ENCODE measurements at regions of chr11 and their contacts with region 1.

Region 1: DNA sequence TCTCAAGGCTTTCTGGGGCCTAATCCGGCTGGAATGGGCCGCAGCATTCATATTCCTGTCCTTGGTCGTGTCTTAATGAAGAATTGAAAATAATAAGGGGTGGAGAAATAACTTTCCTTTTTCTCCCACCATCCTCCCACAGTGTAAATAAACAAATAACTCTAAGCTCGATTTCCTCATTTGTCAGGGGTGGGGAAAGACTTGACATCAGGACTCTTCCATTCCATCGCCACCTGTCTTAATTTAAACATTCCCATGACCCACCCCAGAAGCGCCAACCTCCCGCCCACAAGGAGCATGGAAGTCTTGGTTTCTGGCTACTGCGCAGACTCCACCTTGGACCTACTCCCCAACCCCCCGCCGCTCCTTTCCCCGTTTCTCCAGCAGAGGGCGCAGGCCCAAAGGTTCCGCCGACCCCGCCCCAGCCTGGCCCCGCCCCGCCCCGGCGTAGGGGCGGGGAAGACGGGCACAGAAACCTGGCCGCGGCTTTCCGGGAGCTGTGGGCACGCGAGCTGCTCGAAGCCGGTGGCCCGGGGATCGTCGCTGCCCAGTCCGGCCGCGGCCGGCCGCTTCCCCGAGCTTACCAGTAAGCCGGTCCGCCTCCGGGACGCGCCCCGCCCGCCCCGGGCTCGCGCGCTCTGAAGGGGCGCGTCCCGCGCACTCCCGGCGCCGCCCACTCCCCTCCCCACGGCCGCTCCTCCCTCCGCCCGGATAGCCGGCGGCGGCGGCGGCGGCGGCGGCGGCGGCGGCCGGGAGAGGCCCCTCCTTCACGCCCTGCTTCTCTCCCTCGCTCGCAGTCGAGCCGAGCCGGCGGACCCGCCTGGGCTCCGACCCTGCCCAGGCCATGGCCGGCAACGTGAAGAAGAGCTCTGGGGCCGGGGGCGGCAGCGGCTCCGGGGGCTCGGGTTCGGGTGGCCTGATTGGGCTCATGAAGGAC is at the start of gene CBL:
- DNase-seq: peak; percentile 83 to 99 (median 93)
- ATAC-seq: peak; percentile 97
- H3K4me3 ChIP-seq: peak within 1 kb of the TSS; percentile 88
- H3K4me3 Mint-ChIP-seq: peak within 1 kb of the TSS; percentile 88 to 100 (median 98)
- H3K27ac ChIP-seq: peak within 1 kb of the TSS; percentile 91
- H3K27ac Mint-ChIP-seq: peak within 1 kb of the TSS; percentile 86 to 98 (median 94)
- H3K4me1 ChIP-seq: peaks cover 7 to 23% of the 10 kb centered on the region in 2 donors
- H3K4me1 Mint-ChIP-seq: peaks cover 18 to 49% (median 41%) of the 10 kb centered on the region in 7 donors
- H3K27me3 ChIP-seq: no peaks in the 10 kb centered on the region
- H3K27me3 Mint-ChIP-seq: peaks cover 0 to 3% (median 0%) of the 10 kb centered on the region in 5 donors
- total RNA-seq, gene CBL: 37.0 to 51.8 (median 40.5) TPM

Region 2: DNA sequence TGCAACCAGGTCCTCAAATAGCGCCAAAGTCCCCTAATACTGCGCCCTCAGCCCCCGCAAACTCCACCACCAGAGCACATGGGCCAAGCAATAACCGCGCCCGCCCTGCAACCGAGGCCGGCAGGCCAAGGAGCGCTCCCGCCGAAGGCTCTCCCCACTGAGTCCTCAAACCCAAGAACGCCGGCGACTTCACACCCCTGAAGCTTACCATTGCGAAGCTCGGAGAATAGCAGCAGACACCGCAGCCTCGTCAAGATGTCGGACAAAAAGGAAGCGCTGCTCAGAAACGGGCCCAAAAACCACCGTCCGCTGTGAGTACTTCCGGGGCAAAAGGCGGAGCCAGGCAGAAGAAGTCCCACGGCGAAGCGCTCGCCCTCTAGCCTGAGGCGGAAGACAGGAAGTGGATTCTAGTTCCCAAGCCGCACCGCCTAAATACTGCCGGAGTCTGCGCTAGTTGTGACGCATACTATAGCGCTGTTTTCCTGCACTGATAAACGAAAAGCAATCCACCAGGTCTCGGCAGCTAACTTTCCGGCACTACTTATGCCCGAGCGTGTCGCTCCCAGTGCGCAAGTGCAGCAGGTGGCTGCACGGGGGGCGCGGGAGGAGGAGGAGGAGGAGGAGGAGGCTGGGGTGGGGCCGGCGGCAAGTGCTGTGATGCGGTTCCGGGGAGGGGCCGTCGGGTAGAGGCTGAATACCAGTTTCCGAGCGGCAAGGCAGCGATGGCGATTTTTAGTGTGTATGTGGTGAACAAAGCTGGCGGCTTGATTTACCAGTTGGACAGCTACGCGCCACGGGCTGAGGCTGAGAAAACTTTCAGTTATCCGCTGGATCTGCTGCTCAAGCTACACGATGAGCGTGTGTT is 187.5 kb before region 1 on chr11 and contains the starts of genes RPS25 and TRAPPC4:
- CTCF ChIA-PET with region 1: interaction called, 3 read pairs
- POLR2A ChIA-PET with region 1: no interaction called
- intact Hi-C with region 1: loop called in 1 of 2 experiments (anchors 1 kb)
- DNase-seq: peak; percentile 87 to 98 (median 96)
- ATAC-seq: peak; percentile 93
- H3K4me3 ChIP-seq: peak within 1 kb of the TSS; percentile 89
- H3K4me3 Mint-ChIP-seq: peak within 1 kb of the TSS; percentile 96 to 100 (median 98)
- H3K27ac ChIP-seq: peak within 1 kb of the TSS; percentile 98
- H3K27ac Mint-ChIP-seq: peak within 1 kb of the TSS; percentile 99 to 100 (median 100)
- H3K4me1 ChIP-seq: peaks cover 30 to 32% of the 10 kb centered on the region in 2 donors
- H3K4me1 Mint-ChIP-seq: peaks cover 21 to 75% (median 50%) of the 10 kb centered on the region in 7 donors
- H3K27me3 ChIP-seq: no peaks in the 10 kb centered on the region
- H3K27me3 Mint-ChIP-seq: no peaks in the 10 kb centered on the region
- total RNA-seq, gene RPS25: 1,535 to 3,042 (median 2,772) TPM
- total RNA-seq, gene TRAPPC4: 70.7 to 80.3 (median 77.8) TPM

Region 3: GRCh38 chr11:119067371-119068222 is 138.2 kb before region 1 on chr11 and contains the start of gene VPS11:
- CTCF ChIA-PET with region 1: no interaction called
- POLR2A ChIA-PET with region 1: interaction called, 4 read pairs
- intact Hi-C with region 1: loop called in 1 of 2 experiments (anchors 2 kb)
- DNase-seq: peak; percentile 81 to 98 (median 97)
- ATAC-seq: peak; percentile 93
- H3K4me3 ChIP-seq: peak within 1 kb of the TSS; percentile 93
- H3K4me3 Mint-ChIP-seq: peak within 1 kb of the TSS; percentile 90 to 100 (median 95)
- H3K27ac ChIP-seq: peak within 1 kb of the TSS; percentile 96
- H3K27ac Mint-ChIP-seq: peak within 1 kb of the TSS; percentile 92 to 100 (median 97)
- H3K4me1 ChIP-seq: peaks cover 18 to 23% of the 10 kb centered on the region in 2 donors
- H3K4me1 Mint-ChIP-seq: peaks cover 26 to 59% (median 47%) of the 10 kb centered on the region in 7 donors
- H3K27me3 ChIP-seq: no peaks in the 10 kb centered on the region
- H3K27me3 Mint-ChIP-seq: no peaks in the 10 kb centered on the region
- total RNA-seq, gene VPS11: 39.0 to 73.9 (median 57.1) TPM

Region 4: GRCh38 chr11:119222308-119222707 is 16.5 kb after region 1 on chr11:
- CTCF ChIA-PET with region 1: interaction called, 9 read pairs
- POLR2A ChIA-PET with region 1: interaction called, 9 read pairs
- intact Hi-C with region 1: loop called in 1 of 2 experiments (anchors 2 kb)
- DNase-seq: no peak
- ATAC-seq: no peak
- H3K4me3 ChIP-seq: no peak overlapping the region
- H3K4me3 Mint-ChIP-seq: peak overlapping the region in 8 of 10 donors; percentile 1 to 78 (median 8)
- H3K27ac ChIP-seq: peak overlapping the region; percentile 2
- H3K27ac Mint-ChIP-seq: peak overlapping the region in 8 of 9 donors; percentile 16 to 89 (median 62)
- H3K4me1 ChIP-seq: peaks cover 0 to 5% of the 10 kb centered on the region in 2 donors
- H3K4me1 Mint-ChIP-seq: peaks cover 36 to 79% (median 64%) of the 10 kb centered on the region in 7 donors
- H3K27me3 ChIP-seq: no peaks in the 10 kb centered on the region
- H3K27me3 Mint-ChIP-seq: no peaks in the 10 kb centered on the region

Region 5: GRCh38 chr11:119262668-119263351 is 57.0 kb after region 1 on chr11:
- CTCF ChIA-PET with region 1: interaction called, 15 read pairs
- POLR2A ChIA-PET with region 1: interaction called, 30 read pairs
- intact Hi-C with region 1: loop called (anchors 1 to 2 kb)
- DNase-seq: peak in 1 of 9 donors; percentile 20
- ATAC-seq: peak; percentile 45
- H3K4me3 ChIP-seq: peak overlapping the region; percentile 22
- H3K4me3 Mint-ChIP-seq: no peak overlapping the region
- H3K27ac ChIP-seq: peak overlapping the region; percentile 56
- H3K27ac Mint-ChIP-seq: no peak overlapping the region
- H3K4me1 ChIP-seq: peaks cover 52 to 87% of the 10 kb centered on the region in 2 donors
- H3K4me1 Mint-ChIP-seq: peaks cover 21 to 51% (median 40%) of the 10 kb centered on the region in 7 donors
- H3K27me3 ChIP-seq: no peaks in the 10 kb centered on the region
- H3K27me3 Mint-ChIP-seq: no peaks in the 10 kb centered on the region

Region 6: DNA sequence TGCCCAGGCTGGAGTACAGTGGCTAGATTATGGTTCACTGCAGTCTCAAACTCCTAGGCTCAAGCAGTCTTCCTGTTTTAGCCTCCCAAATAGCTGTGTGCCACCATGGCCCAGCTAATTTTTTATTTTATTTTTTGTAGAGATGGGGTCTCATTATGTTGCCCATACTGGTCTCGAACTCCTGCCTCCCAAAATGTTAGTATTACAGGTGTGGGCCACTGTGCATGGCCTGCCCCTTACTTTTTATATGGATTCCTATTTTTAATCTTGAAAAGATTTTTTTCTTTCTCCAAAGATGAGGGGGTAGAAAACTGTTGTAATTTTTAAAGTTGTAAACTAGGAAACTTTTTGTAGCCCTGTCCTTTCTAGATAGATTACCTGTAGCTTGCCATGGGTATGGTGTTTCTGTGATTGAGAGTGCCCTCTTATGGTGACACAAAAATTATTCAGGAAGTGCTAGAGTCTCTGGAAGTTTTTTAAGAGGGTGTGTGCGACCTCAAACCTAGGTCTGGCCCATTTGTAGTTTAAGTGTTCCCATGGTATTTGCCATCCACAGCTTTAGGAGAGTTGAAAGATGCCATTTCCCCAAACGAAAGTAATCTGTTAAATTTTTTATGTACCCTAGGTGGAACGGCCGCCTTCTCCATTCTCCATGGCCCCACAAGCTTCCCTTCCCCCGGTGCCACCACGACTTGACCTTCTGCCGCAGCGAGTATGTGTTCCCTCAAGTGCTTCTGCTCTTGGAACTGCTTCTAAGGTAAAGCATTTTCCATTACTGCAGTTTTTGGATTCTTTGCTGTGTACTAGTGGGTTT is 78.7 kb after region 1 on chr11:
- CTCF ChIA-PET with region 1: interaction called, 64 read pairs
- POLR2A ChIA-PET with region 1: interaction called, 21 read pairs
- intact Hi-C with region 1: loop called (anchors 1 kb)
- DNase-seq: peak in 7 of 9 donors; percentile 56 to 76 (median 68)
- ATAC-seq: peak; percentile 94
- H3K4me3 ChIP-seq: no peak overlapping the region
- H3K4me3 Mint-ChIP-seq: peak overlapping the region in 2 of 10 donors; percentile 23 to 51
- H3K27ac ChIP-seq: no peak overlapping the region
- H3K27ac Mint-ChIP-seq: peak overlapping the region; percentile 24 to 91 (median 55)
- H3K4me1 ChIP-seq: peaks cover 0 to 6% of the 10 kb centered on the region in 2 donors
- H3K4me1 Mint-ChIP-seq: peaks cover 17 to 56% (median 41%) of the 10 kb centered on the region in 7 donors
- H3K27me3 ChIP-seq: no peaks in the 10 kb centered on the region
- H3K27me3 Mint-ChIP-seq: no peaks in the 10 kb centered on the region

Region 7: GRCh38 chr11:119381181-119381988 is 175.5 kb after region 1 on chr11 and contains the start of gene USP2:
- CTCF ChIA-PET with region 1: no interaction called
- POLR2A ChIA-PET with region 1: no interaction called
- intact Hi-C with region 1: loop called in 1 of 2 experiments (anchors 1 kb)
- DNase-seq: peak; percentile 94 to 98 (median 97)
- ATAC-seq: peak; percentile 99
- H3K4me3 ChIP-seq: peak within 1 kb of the TSS; percentile 81
- H3K4me3 Mint-ChIP-seq: no peak within 1 kb of the TSS
- H3K27ac ChIP-seq: peak within 1 kb of the TSS; percentile 71
- H3K27ac Mint-ChIP-seq: peak within 1 kb of the TSS in 1 of 9 donors; percentile 87
- H3K4me1 ChIP-seq: peaks cover 9 to 14% of the 10 kb centered on the region in 2 donors
- H3K4me1 Mint-ChIP-seq: peaks cover 0 to 13% (median 5%) of the 10 kb centered on the region in 7 donors
- H3K27me3 ChIP-seq: no peaks in the 10 kb centered on the region
- H3K27me3 Mint-ChIP-seq: peaks cover 0 to 9% (median 0%) of the 10 kb centered on the region in 5 donors
- total RNA-seq, gene USP2: 0.07 to 1.1 (median 0.43) TPM